Sciatic nerve (tissue), 2 donors: ENCODE measurements at regions of chr1 and their contacts with region 1.

Region 1: DNA sequence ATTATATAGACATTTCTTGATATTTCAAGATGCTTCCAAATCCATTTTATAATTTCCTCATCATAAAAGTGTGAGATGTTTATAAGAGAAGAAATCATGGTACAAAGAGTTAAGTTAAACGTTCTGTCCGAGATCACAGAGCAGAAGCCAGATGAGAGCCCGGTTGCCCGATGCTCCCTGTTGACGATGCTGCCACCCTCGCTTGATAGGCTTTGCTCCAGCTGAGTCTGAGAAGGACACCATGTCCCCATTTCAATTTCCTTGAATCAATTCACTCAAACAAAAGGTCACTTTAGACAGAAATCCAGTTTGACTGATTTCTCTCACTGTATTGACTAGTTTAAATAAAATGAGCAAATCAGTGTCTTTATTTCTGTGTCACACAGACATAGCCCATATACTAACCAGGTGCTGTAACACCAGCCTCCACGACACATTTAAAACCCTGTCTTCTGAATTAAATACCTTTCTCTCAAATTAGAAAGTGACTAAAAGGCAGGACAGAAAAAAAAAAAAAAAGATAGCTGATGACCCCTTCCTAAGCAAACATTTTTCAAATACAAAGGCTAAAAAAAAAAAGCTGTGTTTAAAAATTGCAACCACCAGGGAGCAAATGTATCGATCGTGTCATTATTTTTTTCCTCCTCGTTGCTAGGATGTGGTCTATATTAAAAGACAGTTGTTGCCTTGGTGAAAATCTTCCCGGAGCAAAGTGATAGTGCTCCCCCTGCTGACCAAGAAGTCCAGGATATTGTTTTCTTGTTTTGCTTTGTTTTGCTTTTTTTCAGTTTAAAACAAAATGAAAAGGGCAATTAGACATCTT is 35.2 kb downstream of the DNASE2B start:
- DNase-seq: no peak
- ATAC-seq: peak; percentile 84

Region 2: GRCh38 chr1:84133479-84133878 is 300.0 kb before region 1 on chr1:
- intact Hi-C with region 1: loop called (anchors 10 kb)
- DNase-seq: no peak
- ATAC-seq: no peak